Naive thymus-derived CD4-positive, alpha-beta T cell (primary cell): ENCODE measurements at regions of chr6 and their contacts with region 1.

Region 1: GRCh38 chr6:130513770-130514169 is 148.0 kb downstream of the TMEM200A start:
- DNase-seq: peak in 8 of 9 donors; percentile 50 to 87 (median 74)
- ATAC-seq: peak; percentile 94
- H3K4me3 ChIP-seq: no peak overlapping the region
- H3K4me3 Mint-ChIP-seq: peak overlapping the region in 9 of 10 donors; percentile 40 to 75 (median 64)
- H3K27ac ChIP-seq: peak overlapping the region; percentile 62
- H3K27ac Mint-ChIP-seq: peak overlapping the region; percentile 77 to 97 (median 87)
- H3K4me1 ChIP-seq: peaks cover 35 to 42% of the 10 kb centered on the region in 2 donors
- H3K4me1 Mint-ChIP-seq: peaks cover 17 to 80% (median 73%) of the 10 kb centered on the region in 7 donors
- H3K27me3 ChIP-seq: no peaks in the 10 kb centered on the region
- H3K27me3 Mint-ChIP-seq: peaks cover 0 to 4% (median 0%) of the 10 kb centered on the region in 5 donors

Region 2: GRCh38 chr6:129672881-129673643 is 840.7 kb before region 1 on chr6:
- CTCF ChIA-PET with region 1: no interaction called
- POLR2A ChIA-PET with region 1: no interaction called
- intact Hi-C with region 1: loop called in 1 of 2 experiments (anchors 10 kb)
- DNase-seq: peak in 2 of 9 donors; percentile 7 to 26
- ATAC-seq: peak; percentile 35
- H3K4me3 ChIP-seq: no peak overlapping the region
- H3K4me3 Mint-ChIP-seq: peak overlapping the region in 9 of 10 donors; percentile 69 to 88 (median 85)
- H3K27ac ChIP-seq: peak overlapping the region; percentile 34
- H3K27ac Mint-ChIP-seq: peak overlapping the region in 8 of 9 donors; percentile 40 to 95 (median 85)
- H3K4me1 ChIP-seq: peaks cover 16 to 22% of the 10 kb centered on the region in 2 donors
- H3K4me1 Mint-ChIP-seq: peaks cover 18 to 57% (median 25%) of the 10 kb centered on the region in 7 donors
- H3K27me3 ChIP-seq: no peaks in the 10 kb centered on the region
- H3K27me3 Mint-ChIP-seq: no peaks in the 10 kb centered on the region

Region 3: GRCh38 chr6:129685662-129686031 is 828.1 kb before region 1 on chr6:
- CTCF ChIA-PET with region 1: no interaction called
- POLR2A ChIA-PET with region 1: no interaction called
- intact Hi-C with region 1: no loop called
- DNase-seq: no peak
- ATAC-seq: no peak
- H3K4me3 ChIP-seq: no peak overlapping the region
- H3K4me3 Mint-ChIP-seq: peak overlapping the region in 1 of 10 donors; percentile 34
- H3K27ac ChIP-seq: no peak overlapping the region
- H3K27ac Mint-ChIP-seq: peak overlapping the region in 1 of 9 donors; percentile 80
- H3K4me1 ChIP-seq: peaks cover 31 to 46% of the 10 kb centered on the region in 2 donors
- H3K4me1 Mint-ChIP-seq: peaks cover 38 to 70% (median 45%) of the 10 kb centered on the region in 7 donors
- H3K27me3 ChIP-seq: no peaks in the 10 kb centered on the region
- H3K27me3 Mint-ChIP-seq: no peaks in the 10 kb centered on the region

Region 4: GRCh38 chr6:130223508-130223907 is 290.3 kb before region 1 on chr6:
- CTCF ChIA-PET with region 1: no interaction called
- POLR2A ChIA-PET with region 1: no interaction called
- intact Hi-C with region 1: loop called in 1 of 2 experiments (anchors 1 kb)
- DNase-seq: peak in 8 of 9 donors; percentile 38 to 65 (median 52)
- ATAC-seq: peak; percentile 89
- H3K4me3 ChIP-seq: peak overlapping the region; percentile 19
- H3K4me3 Mint-ChIP-seq: peak overlapping the region; percentile 4 to 93 (median 80)
- H3K27ac ChIP-seq: peak overlapping the region; percentile 57
- H3K27ac Mint-ChIP-seq: peak overlapping the region; percentile 89 to 97 (median 94)
- H3K4me1 ChIP-seq: peaks cover 16 to 20% of the 10 kb centered on the region in 2 donors
- H3K4me1 Mint-ChIP-seq: peaks cover 10 to 47% (median 39%) of the 10 kb centered on the region in 7 donors
- H3K27me3 ChIP-seq: no peaks in the 10 kb centered on the region
- H3K27me3 Mint-ChIP-seq: no peaks in the 10 kb centered on the region

Region 5: DNA sequence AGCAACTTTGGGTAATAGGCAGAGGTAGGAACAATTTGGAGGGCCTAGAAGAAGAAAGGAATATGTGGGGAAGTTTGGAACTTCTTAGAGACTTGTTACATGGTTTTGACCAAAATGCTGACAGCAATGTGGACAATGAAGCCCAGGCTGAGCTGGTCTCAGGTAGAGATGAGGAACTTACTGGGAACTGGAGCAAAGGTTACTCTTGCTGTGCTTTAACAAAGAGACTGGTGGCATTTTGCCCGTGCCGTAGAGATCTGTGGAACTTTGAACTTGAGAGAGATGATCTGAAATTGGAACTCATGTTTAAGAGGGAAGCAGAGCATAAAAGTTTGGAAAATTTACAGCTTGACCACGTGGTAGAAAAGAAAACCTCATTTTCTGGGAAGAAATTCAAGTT is 176.2 kb before region 1 on chr6:
- CTCF ChIA-PET with region 1: no interaction called
- POLR2A ChIA-PET with region 1: no interaction called
- intact Hi-C with region 1: no loop called
- DNase-seq: no peak
- ATAC-seq: no peak
- H3K4me3 ChIP-seq: no peak overlapping the region
- H3K4me3 Mint-ChIP-seq: no peak overlapping the region
- H3K27ac ChIP-seq: no peak overlapping the region
- H3K27ac Mint-ChIP-seq: no peak overlapping the region
- H3K4me1 ChIP-seq: no peaks in the 10 kb centered on the region
- H3K4me1 Mint-ChIP-seq: no peaks in the 10 kb centered on the region
- H3K27me3 ChIP-seq: no peaks in the 10 kb centered on the region
- H3K27me3 Mint-ChIP-seq: peaks cover 0 to 6% (median 0%) of the 10 kb centered on the region in 5 donors

Region 6: DNA sequence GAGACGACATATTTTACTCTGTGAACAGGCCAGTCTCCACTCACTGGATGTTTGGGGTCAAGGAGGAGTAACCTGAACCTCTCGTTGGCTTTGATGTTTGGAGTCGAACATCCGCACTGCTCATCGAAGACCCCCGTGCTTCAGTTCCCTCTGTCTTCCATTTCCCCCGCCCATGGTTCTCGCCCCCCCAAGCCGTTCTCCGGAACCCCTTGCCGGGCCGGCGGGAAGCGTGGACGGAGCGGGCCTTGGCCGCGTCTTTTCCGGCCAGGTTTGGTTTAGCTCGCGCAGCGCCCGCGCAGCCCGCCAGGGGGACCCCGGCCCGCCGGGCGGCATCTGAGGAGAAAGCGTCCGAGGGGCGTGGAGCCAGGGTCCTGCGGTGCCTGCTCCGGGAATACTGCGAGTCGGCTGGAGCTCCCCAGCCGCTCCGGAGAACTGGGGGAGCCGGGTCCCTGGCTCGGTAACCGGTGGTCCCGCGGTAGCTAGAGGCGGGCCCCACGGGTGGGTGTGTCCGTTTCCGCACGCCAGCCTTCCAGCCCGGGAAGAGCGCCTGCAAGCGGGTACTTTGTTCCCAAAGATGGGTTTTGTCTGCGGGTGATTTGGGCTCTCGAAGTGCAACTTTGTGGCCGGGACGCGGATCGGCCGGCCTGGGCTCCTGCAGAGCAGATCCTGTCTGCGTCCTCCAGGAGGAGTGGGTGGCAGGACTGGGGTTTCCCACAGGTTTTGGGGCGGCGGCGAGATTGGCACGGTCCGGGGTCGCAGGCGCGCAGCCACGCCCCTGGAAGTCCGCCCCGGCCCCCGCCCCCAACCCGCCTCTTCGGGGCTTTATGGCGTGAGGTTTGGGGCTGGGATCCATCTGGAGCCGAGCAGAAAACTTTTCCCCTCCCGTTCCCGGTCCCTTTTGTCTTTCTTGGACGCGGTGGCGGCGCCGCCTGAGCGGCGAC is 148.3 kb before region 1 on chr6 and contains the start of gene TMEM200A:
- CTCF ChIA-PET with region 1: no interaction called
- POLR2A ChIA-PET with region 1: interaction called, 5 read pairs
- intact Hi-C with region 1: loop called in 1 of 2 experiments (anchors 1 kb)
- DNase-seq: peak in 6 of 9 donors; percentile 7 to 63 (median 21)
- ATAC-seq: peak; percentile 64
- H3K4me3 ChIP-seq: peak within 1 kb of the TSS; percentile 68
- H3K4me3 Mint-ChIP-seq: peak within 1 kb of the TSS; percentile 66 to 90 (median 83)
- H3K27ac ChIP-seq: no peak within 1 kb of the TSS
- H3K27ac Mint-ChIP-seq: peak within 1 kb of the TSS in 2 of 9 donors; percentile 55 to 64
- H3K4me1 ChIP-seq: peaks cover 4 to 5% of the 10 kb centered on the region in 2 donors
- H3K4me1 Mint-ChIP-seq: peaks cover 7 to 26% (median 17%) of the 10 kb centered on the region in 7 donors
- H3K27me3 ChIP-seq: no peaks in the 10 kb centered on the region
- H3K27me3 Mint-ChIP-seq: peaks cover 7 to 64% (median 38%) of the 10 kb centered on the region in 5 donors
- total RNA-seq, gene TMEM200A: 0.19 to 7.2 (median 0.99) TPM in 4 of 5 experiments, not detected in the other

Region 7: DNA sequence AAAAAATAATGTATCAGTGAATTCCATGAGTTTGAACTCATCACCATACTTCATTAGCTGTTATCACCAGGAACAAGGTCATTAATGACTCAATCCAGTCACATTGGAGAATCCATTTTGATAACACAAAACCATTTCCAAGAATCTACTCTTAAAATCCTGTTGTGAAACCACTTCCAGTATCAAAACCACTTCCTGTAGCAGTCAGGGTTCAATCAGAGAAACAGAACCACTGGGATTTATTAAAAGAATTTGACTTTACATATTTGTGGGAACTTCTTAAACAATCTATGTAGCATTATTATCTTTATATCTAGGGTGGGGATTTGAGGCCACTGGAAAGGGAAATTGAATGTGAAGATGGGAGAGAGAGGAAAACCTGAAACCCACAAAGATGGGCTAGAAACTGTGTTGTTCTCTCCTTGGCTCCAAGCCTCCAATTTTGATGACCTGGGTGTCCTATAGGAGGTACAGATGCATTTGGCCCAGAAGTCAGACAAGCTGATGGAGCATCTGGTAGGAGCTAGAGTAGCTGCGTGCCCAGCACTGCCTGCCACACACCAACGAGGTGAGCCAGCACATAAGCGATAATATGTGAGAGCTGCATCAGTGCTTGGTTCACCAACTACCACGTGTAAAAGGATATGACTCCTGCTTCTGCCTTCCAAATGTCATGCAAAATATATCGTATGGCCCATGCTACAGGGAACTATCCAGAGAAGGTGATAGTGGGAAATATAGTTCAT is 31.0 kb before region 1 on chr6:
- CTCF ChIA-PET with region 1: no interaction called
- POLR2A ChIA-PET with region 1: no interaction called
- intact Hi-C with region 1: loop called in 1 of 2 experiments (anchors 2 kb)
- DNase-seq: peak in 3 of 9 donors; percentile 8 to 9 (median 9)
- ATAC-seq: no peak
- H3K4me3 ChIP-seq: no peak overlapping the region
- H3K4me3 Mint-ChIP-seq: peak overlapping the region; percentile 15 to 77 (median 51)
- H3K27ac ChIP-seq: no peak overlapping the region
- H3K27ac Mint-ChIP-seq: peak overlapping the region in 4 of 9 donors; percentile 10 to 72 (median 58)
- H3K4me1 ChIP-seq: peaks cover 7 to 16% of the 10 kb centered on the region in 2 donors
- H3K4me1 Mint-ChIP-seq: peaks cover 9 to 40% (median 32%) of the 10 kb centered on the region in 7 donors
- H3K27me3 ChIP-seq: no peaks in the 10 kb centered on the region
- H3K27me3 Mint-ChIP-seq: no peaks in the 10 kb centered on the region

Region 8: GRCh38 chr6:130575971-130576370 is 62.2 kb after region 1 on chr6:
- CTCF ChIA-PET with region 1: no interaction called
- POLR2A ChIA-PET with region 1: interaction called, 3 read pairs
- intact Hi-C with region 1: loop called (anchors 1 kb)
- DNase-seq: peak; percentile 5 to 82 (median 72)
- ATAC-seq: peak; percentile 94
- H3K4me3 ChIP-seq: peak overlapping the region; percentile 31
- H3K4me3 Mint-ChIP-seq: peak overlapping the region; percentile 35 to 82 (median 73)
- H3K27ac ChIP-seq: peak overlapping the region; percentile 8
- H3K27ac Mint-ChIP-seq: peak overlapping the region; percentile 29 to 91 (median 67)
- H3K4me1 ChIP-seq: peaks cover 25 to 39% of the 10 kb centered on the region in 2 donors
- H3K4me1 Mint-ChIP-seq: peaks cover 32 to 62% (median 48%) of the 10 kb centered on the region in 7 donors
- H3K27me3 ChIP-seq: no peaks in the 10 kb centered on the region
- H3K27me3 Mint-ChIP-seq: peaks cover 0 to 4% (median 0%) of the 10 kb centered on the region in 5 donors